Right ventricle myocardium inferior (tissue), 1 donor: ENCODE measurements at regions of chr3 and their contacts with region 1.

Region 1: DNA sequence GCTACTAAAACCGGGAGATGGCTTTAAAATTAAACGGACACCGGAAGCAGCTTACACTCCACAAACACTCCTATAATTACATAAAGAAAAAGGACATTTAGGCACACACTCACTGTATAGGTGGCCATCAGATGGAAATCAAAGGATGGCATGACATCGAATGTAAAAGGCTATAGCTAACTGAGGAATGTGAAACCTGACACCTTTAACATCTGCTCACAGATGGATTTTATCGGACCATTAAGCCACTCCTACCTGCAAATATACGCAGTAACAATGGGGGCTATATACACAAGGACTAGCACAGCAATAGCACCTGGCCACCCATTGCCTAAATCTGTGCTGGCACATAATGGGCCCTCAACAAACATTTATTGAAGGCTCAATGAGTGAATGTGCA is 14.5 kb upstream of the RBSN start:
- DNase-seq: no peak
- ATAC-seq: no peak

Region 2: GRCh38 chr3:14943042-14943441 is 170.4 kb before region 1 on chr3:
- intact Hi-C with region 1: no loop called
- DNase-seq: no peak
- ATAC-seq: no peak

Region 3: GRCh38 chr3:14959359-14959943 is 154.0 kb before region 1 on chr3:
- intact Hi-C with region 1: no loop called
- DNase-seq: no peak
- ATAC-seq: no peak

Region 4: GRCh38 chr3:15171096-15171495 is 57.6 kb after region 1 on chr3:
- intact Hi-C with region 1: loop called (anchors 10 kb)
- DNase-seq: no peak
- ATAC-seq: no peak